CD8-positive, alpha-beta T cell (primary cell): ENCODE measurements at regions of chr14 and their contacts with region 1.

Region 1: DNA sequence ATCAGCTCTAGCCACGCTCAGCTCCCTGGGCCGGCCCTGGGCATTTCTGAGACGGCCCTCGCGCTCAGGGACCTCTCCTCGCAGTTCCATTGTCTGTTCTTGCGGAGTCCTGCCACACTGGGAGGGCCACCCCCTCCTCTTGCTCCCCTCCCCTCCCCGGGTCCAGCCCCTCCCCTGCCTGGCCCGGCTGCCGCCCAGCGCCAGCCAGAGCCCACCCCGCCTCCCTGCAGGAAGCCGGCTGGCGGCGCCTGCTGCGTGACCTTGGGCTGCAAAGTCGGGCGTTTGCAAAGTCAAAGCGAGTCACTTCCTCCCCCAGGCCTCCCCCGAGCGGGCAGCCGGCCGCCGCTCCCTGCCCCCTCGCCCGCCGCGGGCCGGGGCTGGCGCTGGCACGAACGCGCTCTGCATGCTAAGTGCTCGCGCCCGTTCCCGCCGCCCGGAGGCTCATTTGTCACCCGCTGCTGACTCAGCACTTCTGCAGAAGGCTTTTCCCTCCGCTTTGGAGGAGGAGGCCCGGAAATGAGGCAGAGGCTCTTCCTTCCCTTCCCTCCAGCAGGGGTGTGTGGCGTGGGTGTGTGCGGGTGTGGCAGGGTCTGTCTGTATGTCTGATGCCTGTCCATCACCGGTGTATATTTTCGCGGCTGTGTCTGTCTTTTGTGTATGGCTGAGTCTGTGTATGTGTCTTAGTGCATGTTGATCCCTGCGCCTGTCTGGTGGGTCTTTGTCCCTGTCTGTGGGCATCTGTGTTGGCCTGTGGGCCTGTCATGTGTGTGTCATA is 72.0 kb downstream of the IRF2BPL start:
- DNase-seq: peak; percentile 70 to 95 (median 85)
- ATAC-seq: peak; percentile 63
- H3K4me3 ChIP-seq: peak overlapping the region; percentile 62 to 74
- H3K4me3 Mint-ChIP-seq: peak overlapping the region; percentile 84
- H3K27ac ChIP-seq: peak overlapping the region; percentile 93 to 95
- H3K27ac Mint-ChIP-seq: peak overlapping the region; percentile 97
- H3K4me1 ChIP-seq: peaks cover 52% of the 10 kb centered on the region
- H3K4me1 Mint-ChIP-seq: peaks cover 61% of the 10 kb centered on the region
- H3K27me3 ChIP-seq: no peaks in the 10 kb centered on the region
- H3K27me3 Mint-ChIP-seq: no peaks in the 10 kb centered on the region
- CTCF ChIP-seq: no peak

Region 2: DNA sequence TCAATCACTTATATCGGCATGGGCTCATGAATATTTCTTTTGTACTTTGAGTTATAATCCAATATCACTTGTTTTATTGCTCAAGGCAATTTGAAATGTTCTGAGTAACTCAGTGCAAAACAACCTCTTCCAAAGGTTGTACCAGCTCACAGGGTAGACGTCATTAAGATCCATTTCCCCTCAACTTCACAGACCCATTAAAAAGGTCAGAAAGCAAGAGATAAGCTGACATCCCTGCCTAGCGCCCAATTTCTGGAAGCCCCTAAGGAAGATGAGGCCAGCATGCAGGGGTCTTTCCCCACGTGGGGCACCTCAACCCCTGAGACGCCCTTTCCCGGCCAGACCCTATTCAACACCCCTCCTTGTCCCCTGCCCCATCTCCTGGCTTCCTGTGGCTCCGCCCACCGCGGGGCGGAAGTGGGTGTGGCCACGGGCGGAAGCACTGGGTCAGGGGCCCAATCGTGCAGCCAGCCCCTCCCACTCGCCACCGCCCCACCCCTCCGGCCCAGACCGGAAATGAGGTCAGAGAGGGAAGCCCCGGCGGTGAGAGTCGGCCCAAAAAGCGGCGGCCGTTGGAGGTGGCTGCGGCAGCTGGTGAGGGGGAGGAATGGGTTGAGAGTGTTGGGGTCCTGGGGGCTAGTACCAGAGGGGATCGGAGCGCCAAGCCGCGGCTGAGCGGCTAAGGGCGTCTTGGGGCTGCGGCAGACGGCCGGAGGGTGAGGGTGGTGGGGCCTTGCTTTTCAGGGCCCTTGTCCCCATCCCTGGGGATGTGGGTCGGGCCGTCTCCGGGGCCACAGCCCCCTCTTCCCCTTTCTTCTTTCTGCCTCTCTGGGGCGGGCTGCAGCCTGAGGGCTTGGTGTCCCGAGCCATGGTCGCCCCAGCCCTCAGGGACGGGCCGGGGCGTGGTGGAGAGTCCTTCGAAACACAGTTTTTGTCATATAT is 804.8 kb before region 1 on chr14 and contains the start of gene GPATCH2L:
- CTCF ChIA-PET with region 1: no interaction called
- POLR2A ChIA-PET with region 1: no interaction called
- intact Hi-C with region 1: no loop called
- DNase-seq: peak; percentile 95 to 98 (median 97)
- ATAC-seq: peak; percentile 87
- H3K4me3 ChIP-seq: peak within 1 kb of the TSS; percentile 86 to 99
- H3K4me3 Mint-ChIP-seq: peak within 1 kb of the TSS; percentile 93
- H3K27ac ChIP-seq: peak within 1 kb of the TSS; percentile 85 to 98
- H3K27ac Mint-ChIP-seq: peak within 1 kb of the TSS; percentile 95
- H3K4me1 ChIP-seq: peaks cover 47% of the 10 kb centered on the region
- H3K4me1 Mint-ChIP-seq: peaks cover 54% of the 10 kb centered on the region
- H3K27me3 ChIP-seq: no peaks in the 10 kb centered on the region
- H3K27me3 Mint-ChIP-seq: no peaks in the 10 kb centered on the region
- CTCF ChIP-seq: no peak
- total RNA-seq, gene GPATCH2L: 74.4 to 78.1 TPM

Region 3: GRCh38 chr14:76413962-76414625 is 542.4 kb before region 1 on chr14:
- CTCF ChIA-PET with region 1: no interaction called
- POLR2A ChIA-PET with region 1: no interaction called
- intact Hi-C with region 1: no loop called
- DNase-seq: no peak
- ATAC-seq: no peak
- H3K4me3 ChIP-seq: no peak overlapping the region
- H3K4me3 Mint-ChIP-seq: peak overlapping the region; percentile 18
- H3K27ac ChIP-seq: no peak overlapping the region
- H3K27ac Mint-ChIP-seq: no peak overlapping the region
- H3K4me1 ChIP-seq: no peaks in the 10 kb centered on the region
- H3K4me1 Mint-ChIP-seq: peaks cover 5% of the 10 kb centered on the region
- H3K27me3 ChIP-seq: no peaks in the 10 kb centered on the region
- H3K27me3 Mint-ChIP-seq: peaks cover 40% of the 10 kb centered on the region
- CTCF ChIP-seq: no peak

Region 4: DNA sequence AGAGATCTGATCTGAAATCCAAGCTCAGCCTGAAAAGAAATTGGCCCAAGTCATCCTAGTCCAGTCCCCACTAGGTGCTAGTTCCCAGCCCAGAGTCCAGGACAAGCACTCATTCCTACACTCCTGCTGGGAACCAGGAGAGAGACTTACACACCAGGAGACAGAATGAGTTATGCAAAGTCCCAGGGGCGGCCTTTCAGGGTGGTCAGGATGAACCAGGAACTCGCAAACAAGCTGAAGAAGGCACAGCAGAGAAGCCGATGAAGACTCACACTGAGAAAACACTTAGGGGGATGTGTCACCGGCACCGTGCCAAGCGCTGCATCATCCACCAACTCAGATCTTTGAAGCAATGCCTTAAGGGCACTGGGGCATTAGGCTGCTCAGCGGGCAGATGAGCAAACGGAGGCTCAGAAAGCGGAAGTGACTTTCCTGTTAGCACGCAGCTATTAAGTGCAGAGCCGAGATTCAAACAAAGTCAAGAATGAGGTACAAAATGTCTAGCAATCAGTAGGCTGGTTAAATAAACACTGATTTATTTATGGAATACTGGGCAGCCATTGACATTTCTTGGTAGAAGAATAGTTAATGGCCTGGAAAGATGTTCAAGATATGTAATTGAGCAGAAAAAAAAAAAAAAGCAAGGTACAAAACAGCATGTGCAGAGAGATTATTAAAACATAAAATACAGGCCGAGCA is 51.6 kb before region 1 on chr14:
- CTCF ChIA-PET with region 1: no interaction called
- POLR2A ChIA-PET with region 1: no interaction called
- intact Hi-C with region 1: loop called in 1 of 2 experiments (anchors 1 kb)
- DNase-seq: peak; percentile 38 to 85 (median 77)
- ATAC-seq: peak; percentile 84
- H3K4me3 ChIP-seq: peak overlapping the region in 1 of 2 experiments; percentile 3
- H3K4me3 Mint-ChIP-seq: peak overlapping the region; percentile 61
- H3K27ac ChIP-seq: no peak overlapping the region
- H3K27ac Mint-ChIP-seq: peak overlapping the region; percentile 68
- H3K4me1 ChIP-seq: peaks cover 28% of the 10 kb centered on the region
- H3K4me1 Mint-ChIP-seq: peaks cover 23% of the 10 kb centered on the region
- H3K27me3 ChIP-seq: no peaks in the 10 kb centered on the region
- H3K27me3 Mint-ChIP-seq: no peaks in the 10 kb centered on the region
- CTCF ChIP-seq: no peak

Region 5: GRCh38 chr14:76926521-76927251 is 29.8 kb before region 1 on chr14:
- CTCF ChIA-PET with region 1: interaction called, 5 read pairs
- POLR2A ChIA-PET with region 1: interaction called, 15 read pairs
- intact Hi-C with region 1: loop called (anchors 2 kb)
- DNase-seq: peak; percentile 20 to 89 (median 65)
- ATAC-seq: peak; percentile 57
- H3K4me3 ChIP-seq: peak overlapping the region in 1 of 2 experiments; percentile 54
- H3K4me3 Mint-ChIP-seq: peak overlapping the region; percentile 75
- H3K27ac ChIP-seq: peak overlapping the region; percentile 25 to 63
- H3K27ac Mint-ChIP-seq: peak overlapping the region; percentile 85
- H3K4me1 ChIP-seq: peaks cover 61% of the 10 kb centered on the region
- H3K4me1 Mint-ChIP-seq: peaks cover 76% of the 10 kb centered on the region
- H3K27me3 ChIP-seq: no peaks in the 10 kb centered on the region
- H3K27me3 Mint-ChIP-seq: no peaks in the 10 kb centered on the region
- CTCF ChIP-seq: no peak

Region 6: GRCh38 chr14:77040059-77040740 is 83.7 kb after region 1 on chr14:
- CTCF ChIA-PET with region 1: interaction called, 12 read pairs
- POLR2A ChIA-PET with region 1: interaction called, 29 read pairs
- intact Hi-C with region 1: loop called (anchors 1 kb)
- DNase-seq: peak; percentile 94 to 100 (median 99)
- ATAC-seq: peak; percentile 77
- H3K4me3 ChIP-seq: peak overlapping the region; percentile 42 to 47
- H3K4me3 Mint-ChIP-seq: peak overlapping the region; percentile 86
- H3K27ac ChIP-seq: peak overlapping the region; percentile 90 to 94
- H3K27ac Mint-ChIP-seq: peak overlapping the region; percentile 99
- H3K4me1 ChIP-seq: peaks cover 74% of the 10 kb centered on the region
- H3K4me1 Mint-ChIP-seq: peaks cover 90% of the 10 kb centered on the region
- H3K27me3 ChIP-seq: no peaks in the 10 kb centered on the region
- H3K27me3 Mint-ChIP-seq: no peaks in the 10 kb centered on the region
- CTCF ChIP-seq: no peak